Activated CD4-positive, alpha-beta memory T cell treated with anti-CD3 and anti-CD28 coated beads, Interleukin-2, amount 10 ng/mL, durations not matched to agents 7 days and 5 days (primary cell): ENCODE measurements at regions of chr7 and their contacts with region 1.

Region 1: GRCh38 chr7:44999245-45000095 is 531 bp upstream of the CCM2 start:
- DNase-seq: peak; percentile 100
- H3K4me3 Mint-ChIP-seq: peak overlapping the region; percentile 80
- H3K27ac Mint-ChIP-seq: peak overlapping the region; percentile 87
- H3K4me1 Mint-ChIP-seq: peaks cover 59% of the 10 kb centered on the region
- H3K27me3 Mint-ChIP-seq: no peaks in the 10 kb centered on the region

Region 2: DNA sequence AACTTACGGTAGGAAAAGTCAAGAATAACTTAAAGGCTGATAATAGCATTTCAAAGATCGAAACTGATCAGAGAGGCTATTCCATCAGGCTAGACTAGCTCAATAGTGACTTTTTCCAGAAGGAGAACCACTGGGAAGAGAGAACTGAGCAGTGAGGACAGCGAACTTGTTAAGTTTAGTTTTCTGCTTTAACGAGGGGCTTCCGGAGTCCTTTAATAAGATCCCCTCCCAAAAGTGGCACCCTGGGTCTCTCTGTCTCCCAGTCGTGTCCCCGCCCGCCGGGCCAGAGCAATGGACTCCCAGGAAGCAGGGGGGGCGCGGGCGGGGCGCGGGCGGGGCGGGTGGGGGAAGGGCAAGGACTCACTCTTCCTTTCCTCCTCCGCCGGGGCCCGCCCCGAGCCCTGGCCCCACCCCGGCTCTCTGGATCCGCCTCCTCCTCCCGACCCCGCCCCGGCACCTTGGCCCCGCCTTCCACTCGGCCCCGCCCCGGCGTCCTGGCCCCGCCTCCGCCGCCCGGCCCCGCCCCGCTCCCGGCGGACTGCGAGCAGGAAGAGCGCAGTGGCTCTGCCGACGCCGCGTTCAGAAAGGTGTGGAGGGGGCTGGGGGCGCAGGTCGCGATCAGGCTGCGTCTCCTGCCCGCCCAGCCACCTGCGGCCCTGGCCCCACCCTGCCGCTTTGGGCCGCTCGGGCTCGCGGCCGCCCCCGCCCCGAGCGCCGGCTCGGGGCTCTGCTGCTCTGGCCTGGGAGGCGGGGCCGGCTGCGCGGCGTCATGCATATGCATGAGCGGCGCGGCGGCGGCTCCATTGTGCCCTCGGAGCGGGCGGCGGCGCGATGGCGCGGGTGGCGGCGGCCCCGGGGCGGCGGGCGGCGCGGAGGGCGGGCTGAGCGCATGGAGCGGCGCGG is 251.2 kb before region 1 on chr7 and contains the start of gene ZMIZ2:
- CTCF ChIA-PET with region 1: no interaction called
- POLR2A ChIA-PET with region 1: no interaction called
- DNase-seq: peak; percentile 92
- H3K4me3 Mint-ChIP-seq: peak within 1 kb of the TSS; percentile 84
- H3K27ac Mint-ChIP-seq: peak within 1 kb of the TSS; percentile 66
- H3K4me1 Mint-ChIP-seq: peaks cover 43% of the 10 kb centered on the region
- H3K27me3 Mint-ChIP-seq: no peaks in the 10 kb centered on the region
- total RNA-seq, gene ZMIZ2: 85.2 to 91.4 TPM

Region 3: DNA sequence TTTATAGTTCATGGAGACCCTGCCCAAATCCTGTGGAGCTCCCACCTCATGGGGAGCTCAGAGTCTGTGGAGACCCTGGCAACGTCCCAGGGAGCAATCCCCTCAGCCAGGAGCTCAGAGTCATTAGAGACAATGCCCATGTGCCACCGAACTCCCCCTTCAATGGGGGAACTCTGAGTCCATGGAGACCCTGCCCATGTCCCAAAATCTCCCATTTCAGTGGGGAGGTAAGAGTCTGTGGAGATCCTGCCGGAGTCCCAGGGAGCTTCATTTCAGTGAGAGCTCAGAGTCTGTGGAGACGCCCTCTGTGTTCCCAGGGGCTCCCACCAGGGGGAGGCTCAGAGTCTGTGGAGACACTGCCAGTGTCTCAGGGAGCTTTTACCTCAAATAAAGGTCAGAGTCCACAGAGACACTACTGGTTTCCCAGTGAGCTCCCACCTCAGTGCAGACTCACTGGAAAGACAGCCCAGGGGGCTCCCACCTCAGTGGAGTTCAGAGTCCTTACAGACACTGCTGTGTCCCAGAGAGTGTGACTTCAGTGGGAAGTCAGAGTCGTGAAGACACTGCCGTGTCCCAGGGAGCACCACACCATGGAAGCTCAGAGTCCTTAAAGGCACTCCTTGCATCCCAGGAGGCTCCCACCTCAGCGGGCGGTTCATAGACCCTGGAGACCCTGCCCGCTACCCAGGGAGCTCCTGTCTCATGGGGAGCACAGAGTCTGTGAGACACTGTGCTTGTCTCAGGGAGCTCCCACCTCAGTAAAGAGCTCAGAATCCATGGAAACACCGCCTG is 25.7 kb before region 1 on chr7:
- CTCF ChIA-PET with region 1: interaction called, 88 read pairs
- POLR2A ChIA-PET with region 1: interaction called, 517 read pairs
- DNase-seq: peak; percentile 66
- H3K4me3 Mint-ChIP-seq: peak overlapping the region; percentile 43
- H3K27ac Mint-ChIP-seq: peak overlapping the region; percentile 44
- H3K4me1 Mint-ChIP-seq: peaks cover 55% of the 10 kb centered on the region
- H3K27me3 Mint-ChIP-seq: no peaks in the 10 kb centered on the region

Region 4: GRCh38 chr7:44986218-44987053 is 13.0 kb before region 1 on chr7:
- CTCF ChIA-PET with region 1: interaction called, 15 read pairs
- POLR2A ChIA-PET with region 1: interaction called, 517 read pairs
- DNase-seq: peak; percentile 96
- H3K4me3 Mint-ChIP-seq: peak overlapping the region; percentile 99
- H3K27ac Mint-ChIP-seq: peak overlapping the region; percentile 96
- H3K4me1 Mint-ChIP-seq: peaks cover 73% of the 10 kb centered on the region
- H3K27me3 Mint-ChIP-seq: no peaks in the 10 kb centered on the region

Region 5: DNA sequence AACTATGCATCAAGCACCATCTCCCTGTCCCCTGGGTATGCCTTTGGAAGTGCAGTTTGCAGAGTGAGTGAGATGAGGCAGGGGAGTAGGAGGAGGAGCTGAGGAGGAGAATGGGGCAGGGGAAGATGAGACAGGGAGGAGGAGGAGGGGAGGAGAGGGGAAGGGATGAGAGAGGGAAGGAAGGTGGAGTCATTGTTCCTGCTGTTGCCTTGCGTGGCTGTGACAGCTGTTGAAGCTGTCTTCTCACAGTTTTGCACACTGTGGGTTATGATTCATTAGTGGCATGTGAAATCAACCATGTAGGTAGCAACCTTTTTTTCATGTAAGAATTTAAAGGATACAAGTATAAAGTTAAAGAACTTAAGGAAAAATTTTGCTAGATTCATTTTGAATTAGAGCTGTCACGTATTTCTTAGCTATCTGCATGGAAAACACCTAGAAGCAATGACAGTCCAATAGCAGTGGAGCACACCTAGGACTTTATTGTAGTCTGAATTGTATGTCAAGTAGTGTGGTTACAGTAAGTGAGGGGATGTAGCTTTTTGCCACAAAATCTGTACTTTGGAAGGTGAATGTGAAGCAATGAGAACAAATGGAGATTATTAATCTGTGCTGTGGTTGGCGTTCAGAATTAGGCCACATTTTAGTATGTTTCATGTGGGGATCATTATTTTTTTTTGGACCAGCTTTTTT is 22.3 kb after region 1 on chr7:
- CTCF ChIA-PET with region 1: interaction called, 11 read pairs
- POLR2A ChIA-PET with region 1: interaction called, 166 read pairs
- DNase-seq: peak; percentile 33
- H3K4me3 Mint-ChIP-seq: no peak overlapping the region
- H3K27ac Mint-ChIP-seq: peak overlapping the region; percentile 79
- H3K4me1 Mint-ChIP-seq: peaks cover 48% of the 10 kb centered on the region
- H3K27me3 Mint-ChIP-seq: no peaks in the 10 kb centered on the region

Region 6: DNA sequence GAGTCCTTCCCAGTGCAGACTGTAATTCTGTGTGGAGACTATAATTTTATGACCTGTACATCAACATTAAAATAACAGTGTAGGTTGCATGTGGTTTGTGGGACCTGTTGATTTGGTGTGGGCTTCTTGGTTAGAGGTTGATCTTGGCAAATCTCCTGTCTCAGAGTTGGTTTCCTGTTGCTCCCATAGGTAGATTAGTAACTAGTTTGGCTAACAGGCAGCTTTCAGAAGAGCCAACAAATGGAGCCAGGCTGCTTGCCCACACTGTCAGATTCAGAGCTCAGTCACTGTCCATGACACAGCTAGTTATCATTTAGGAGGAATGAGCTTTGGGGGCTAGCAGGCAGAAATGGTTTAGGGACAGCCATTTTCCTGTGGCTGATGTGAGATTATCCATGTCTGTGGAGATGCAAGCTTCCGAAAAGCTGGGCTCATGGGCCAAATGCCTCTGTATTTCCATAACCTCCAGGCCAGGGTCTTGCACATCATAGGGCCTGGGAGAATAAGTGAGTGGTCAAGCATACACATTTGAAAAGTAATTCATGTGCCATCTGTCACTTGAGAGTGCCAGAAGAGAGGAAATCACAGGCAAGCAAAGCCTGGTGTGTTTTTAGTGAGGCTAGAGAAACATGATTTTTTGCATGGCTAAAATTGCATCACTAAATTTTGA is 33.9 kb after region 1 on chr7:
- CTCF ChIA-PET with region 1: interaction called, 8 read pairs
- POLR2A ChIA-PET with region 1: interaction called, 166 read pairs
- DNase-seq: peak; percentile 28
- H3K4me3 Mint-ChIP-seq: peak overlapping the region; percentile 55
- H3K27ac Mint-ChIP-seq: peak overlapping the region; percentile 79
- H3K4me1 Mint-ChIP-seq: peaks cover 78% of the 10 kb centered on the region
- H3K27me3 Mint-ChIP-seq: no peaks in the 10 kb centered on the region